Panc1 (cell line): ENCODE measurements at regions of chrX and their contacts with region 1.

Region 1: DNA sequence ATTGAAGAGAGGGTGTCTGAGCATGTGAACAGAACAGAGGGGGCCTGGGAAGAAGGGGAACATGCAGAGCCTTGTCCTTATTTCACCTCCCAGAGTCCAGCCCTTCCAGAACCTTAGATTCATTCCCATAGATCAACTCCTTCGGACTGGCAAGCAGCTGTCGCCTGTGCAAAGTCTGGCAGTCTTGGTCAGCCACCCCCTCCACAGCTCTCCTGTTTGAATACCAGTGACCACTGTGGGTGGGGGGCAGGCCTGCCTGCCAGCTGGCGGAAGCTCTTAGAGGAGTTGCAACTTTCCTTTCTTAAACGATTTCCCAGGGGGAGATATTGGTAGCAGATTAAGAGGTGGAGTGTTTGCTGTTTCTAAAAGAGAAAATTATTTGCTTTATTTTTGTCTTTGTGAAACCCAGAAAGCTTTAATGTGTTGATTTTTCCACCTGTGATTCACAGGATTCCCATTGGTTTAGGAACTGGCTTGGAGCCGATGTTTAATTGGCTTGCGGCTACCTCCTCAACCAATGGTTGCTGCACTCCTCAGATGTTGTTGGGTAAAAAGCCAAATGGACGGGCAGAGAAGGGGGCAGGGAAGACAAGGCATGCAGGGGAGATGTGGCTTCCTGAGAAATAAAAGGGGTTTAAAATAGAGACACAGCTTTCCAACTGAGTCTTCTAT is 62.2 kb upstream of the PRPS1 start:
- DNase-seq: no peak
- ATAC-seq: peak; percentile 60; the same call in 1 of the 2 replicates
- H3K4me3 ChIP-seq: no peak overlapping the region
- H3K27ac ChIP-seq: no peak overlapping the region
- H3K4me1 ChIP-seq: no peaks in the 10 kb centered on the region; the same call in none of the 2 replicates
- H3K27me3 ChIP-seq: no peaks in the 10 kb centered on the region
- CTCF ChIP-seq: no peak

Region 2: GRCh38 chrX:106980952-106981626 is 585.0 kb before region 1 on chrX:
- CTCF ChIA-PET with region 1: no interaction called
- POLR2A ChIA-PET with region 1: no interaction called
- in situ Hi-C with region 1: no loop called
- intact Hi-C with region 1: no loop called
- DNase-seq: no peak
- ATAC-seq: no peak
- H3K4me3 ChIP-seq: no peak overlapping the region
- H3K27ac ChIP-seq: no peak overlapping the region
- H3K4me1 ChIP-seq: no peaks in the 10 kb centered on the region
- H3K27me3 ChIP-seq: no peaks in the 10 kb centered on the region
- CTCF ChIP-seq: no peak

Region 3: DNA sequence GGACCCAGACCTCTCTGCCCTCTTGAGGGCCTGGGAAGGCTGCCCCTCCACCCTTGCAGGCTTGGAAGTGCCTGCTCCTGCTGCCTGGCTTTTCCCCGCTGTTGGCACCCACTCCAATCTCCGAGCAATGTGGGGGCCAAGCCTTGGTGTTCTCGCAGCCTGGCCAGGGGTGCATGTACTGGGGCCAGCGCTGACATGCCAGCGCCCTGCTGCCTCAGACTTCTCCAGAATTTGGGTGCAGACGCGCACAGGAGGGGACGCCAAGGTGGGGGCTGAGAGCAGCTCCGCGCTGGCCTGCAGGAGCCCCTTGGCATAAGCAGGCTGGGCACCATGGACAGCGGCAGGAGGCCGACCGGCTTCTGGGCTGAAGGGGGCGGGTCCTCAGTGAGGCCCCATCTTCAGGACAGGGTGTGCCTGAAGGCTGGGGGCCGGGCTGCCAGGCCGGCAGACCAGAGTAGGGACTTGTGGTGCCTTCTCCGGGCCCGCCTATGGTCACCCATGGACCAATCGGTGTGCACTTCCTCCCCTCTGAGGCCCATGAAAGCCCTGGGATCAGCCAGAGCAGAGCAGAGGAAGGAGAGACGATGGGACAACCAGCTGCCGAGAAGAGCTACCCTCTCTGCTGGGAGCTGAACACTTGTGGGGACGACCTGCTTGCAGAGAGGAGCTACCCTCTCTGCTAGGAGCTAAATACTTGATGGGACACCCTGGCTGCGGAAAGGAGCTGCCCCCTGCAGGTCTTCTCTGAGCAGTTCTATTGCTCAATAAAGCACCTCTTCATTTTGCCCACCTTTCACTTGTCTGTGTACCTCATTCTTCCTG is 241.4 kb before region 1 on chrX:
- CTCF ChIA-PET with region 1: interaction called, 15 read pairs
- POLR2A ChIA-PET with region 1: no interaction called
- in situ Hi-C with region 1: no loop called
- intact Hi-C with region 1: no loop called
- DNase-seq: no peak
- ATAC-seq: peak; percentile 68
- H3K4me3 ChIP-seq: no peak overlapping the region
- H3K27ac ChIP-seq: no peak overlapping the region
- H3K4me1 ChIP-seq: no peaks in the 10 kb centered on the region
- H3K27me3 ChIP-seq: no peaks in the 10 kb centered on the region
- CTCF ChIP-seq: peak; percentile 61

Region 4: DNA sequence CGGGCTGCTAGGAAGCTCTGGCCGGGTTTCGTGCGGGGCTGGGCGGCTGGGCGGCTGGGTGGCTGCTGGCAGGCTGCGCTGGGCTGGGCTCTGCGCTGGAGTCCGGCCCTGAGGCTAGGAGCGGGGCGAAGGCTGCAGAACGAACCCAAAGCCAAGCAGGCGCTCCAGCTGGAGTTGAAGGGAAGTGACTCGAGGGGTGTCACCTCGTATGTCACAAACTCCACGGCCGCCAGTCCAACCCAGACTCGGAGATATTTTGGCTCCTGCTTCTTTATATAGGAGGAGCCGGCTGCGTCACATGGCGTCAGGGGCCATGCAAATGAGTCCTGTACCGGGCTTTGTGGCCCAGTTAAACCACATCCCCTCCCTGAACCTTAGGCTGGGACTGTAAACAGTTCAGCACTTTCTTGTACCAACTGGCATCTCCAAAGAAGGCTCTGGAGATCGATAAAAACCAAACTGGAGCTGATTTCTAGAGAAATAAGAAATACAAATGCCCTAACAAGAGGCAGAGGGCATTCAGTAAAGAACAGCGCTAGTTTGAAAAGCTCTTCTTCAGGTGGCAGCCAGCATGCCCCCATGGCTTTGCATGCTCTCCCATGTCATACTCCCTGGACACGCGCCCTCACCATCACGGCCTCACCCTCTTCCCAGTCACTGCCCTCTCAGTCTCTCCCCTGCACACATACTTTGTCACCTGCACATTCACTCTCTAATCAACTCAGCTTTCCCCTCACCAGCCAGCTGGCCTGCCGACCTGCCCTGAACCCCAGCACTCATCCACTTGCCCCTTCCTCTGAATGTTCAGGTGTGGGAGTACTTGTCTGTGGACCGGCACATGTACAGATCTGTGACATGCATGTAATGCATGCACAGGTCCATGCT is 151.0 kb after region 1 on chrX:
- CTCF ChIA-PET with region 1: no interaction called
- POLR2A ChIA-PET with region 1: no interaction called
- in situ Hi-C with region 1: no loop called
- intact Hi-C with region 1: no loop called
- DNase-seq: no peak
- ATAC-seq: peak; percentile 71
- H3K4me3 ChIP-seq: peak overlapping the region; percentile 64 to 87
- H3K27ac ChIP-seq: peak overlapping the region; percentile 58; the same call in 1 of the 2 replicates
- H3K4me1 ChIP-seq: peaks cover 8% of the 10 kb centered on the region; the same call in 1 of the 2 replicates
- H3K27me3 ChIP-seq: no peaks in the 10 kb centered on the region
- CTCF ChIP-seq: no peak